ENCODE measurements at regions of chr7 and their contacts with region 1.

Region 1: GRCh38 chr7:121395961-121396757 is at the start of gene FAM3C:
- DNase-seq: peak; percentile 96
- ATAC-seq: peak; percentile 88
- H3K4me3 Mint-ChIP-seq: peak within 1 kb of the TSS; percentile 91
- H3K27ac Mint-ChIP-seq: peak within 1 kb of the TSS; percentile 90
- H3K4me1 Mint-ChIP-seq: peaks cover 42% of the 10 kb centered on the region
- H3K27me3 Mint-ChIP-seq: no peaks in the 10 kb centered on the region
- CTCF ChIP-seq: no peak
- total RNA-seq, gene FAM3C: 54.8 and 59.3 TPM in 2 replicates

Region 2: DNA sequence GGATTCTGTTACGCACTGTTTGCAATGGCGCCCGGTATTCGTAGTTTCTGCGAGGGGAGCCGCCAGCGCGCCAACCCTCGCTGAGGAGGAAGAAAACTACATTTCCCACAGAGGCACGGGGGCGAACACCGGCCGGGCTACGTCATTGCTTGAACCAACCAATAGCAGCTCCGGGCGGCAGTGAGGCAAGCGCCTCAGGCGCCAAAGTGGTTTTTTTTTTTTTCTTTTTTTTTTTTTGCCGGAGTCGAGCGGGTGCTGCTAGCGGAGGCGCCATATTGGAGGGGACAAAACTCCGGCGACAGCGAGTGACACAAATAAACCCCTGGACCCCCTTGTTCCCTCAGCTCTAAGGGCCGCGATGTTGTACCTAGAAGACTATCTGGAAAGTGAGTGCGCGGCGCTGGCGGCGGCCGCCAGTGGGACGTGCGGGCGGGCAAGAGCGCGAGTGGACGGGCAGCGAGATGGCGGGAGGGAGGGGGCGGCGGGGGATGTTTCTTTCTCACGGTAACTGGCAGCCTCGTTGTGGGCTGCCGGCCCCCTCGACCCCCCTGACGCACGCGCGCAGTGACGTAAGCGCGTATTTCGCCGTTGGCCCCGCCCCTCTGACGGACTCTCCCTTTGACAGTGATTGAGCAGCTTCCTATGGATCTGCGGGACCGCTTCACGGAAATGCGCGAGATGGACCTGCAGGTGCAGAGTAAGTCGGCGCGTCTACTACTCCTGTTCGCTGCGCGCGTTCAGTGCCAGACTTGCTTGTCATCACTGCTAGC is 445.4 kb before region 1 on chr7 and contains the start of gene ING3:
- CTCF ChIA-PET with region 1: no interaction called
- POLR2A ChIA-PET with region 1: interaction called, 22 read pairs
- intact Hi-C with region 1: loop called (anchors 1 kb)
- DNase-seq: peak; percentile 99
- ATAC-seq: peak; percentile 89
- H3K4me3 Mint-ChIP-seq: peak within 1 kb of the TSS; percentile 95
- H3K27ac Mint-ChIP-seq: peak within 1 kb of the TSS; percentile 99
- H3K4me1 Mint-ChIP-seq: peaks cover 26% of the 10 kb centered on the region
- H3K27me3 Mint-ChIP-seq: peaks cover 3% of the 10 kb centered on the region
- CTCF ChIP-seq: no peak
- total RNA-seq, gene ING3: 32.7 and 36.1 TPM in 2 replicates

Region 3: DNA sequence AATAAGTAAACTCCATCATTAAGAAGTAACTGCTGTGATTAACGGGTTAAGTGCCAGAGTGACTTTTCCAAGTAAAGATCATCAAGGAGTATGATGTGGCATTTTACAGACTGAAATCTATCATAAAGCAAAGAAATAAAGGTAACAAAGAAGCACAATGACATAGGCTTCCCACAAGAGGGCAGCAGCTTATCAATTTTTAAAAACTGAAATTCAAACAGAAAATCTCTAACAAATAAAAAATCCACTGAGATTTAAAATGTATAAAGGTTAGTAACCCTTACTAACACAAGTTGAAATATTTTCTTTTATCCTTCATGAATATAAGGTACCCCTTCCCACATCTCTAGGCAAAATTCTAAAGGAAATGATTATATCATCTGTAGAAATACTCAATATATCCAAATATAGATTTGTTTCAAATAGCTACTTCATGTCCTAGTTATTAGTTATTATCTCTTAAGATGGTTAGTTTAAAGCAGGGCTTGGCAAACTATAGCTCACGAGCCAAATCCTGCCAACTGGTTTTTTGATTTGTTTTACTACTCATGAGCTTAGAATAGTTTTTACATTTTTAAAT is 29.2 kb before region 1 on chr7:
- CTCF ChIA-PET with region 1: interaction called, 221 read pairs
- POLR2A ChIA-PET with region 1: interaction called, 152 read pairs
- intact Hi-C with region 1: loop called (anchors 1 kb)
- DNase-seq: no peak
- ATAC-seq: peak; percentile 49
- H3K4me3 Mint-ChIP-seq: no peak overlapping the region
- H3K27ac Mint-ChIP-seq: peak overlapping the region; percentile 35
- H3K4me1 Mint-ChIP-seq: peaks cover 62% of the 10 kb centered on the region
- H3K27me3 Mint-ChIP-seq: no peaks in the 10 kb centered on the region
- CTCF ChIP-seq: peak; percentile 21

Region 4: GRCh38 chr7:121379930-121380329 is 16.2 kb before region 1 on chr7:
- CTCF ChIA-PET with region 1: interaction called, 221 read pairs
- POLR2A ChIA-PET with region 1: interaction called, 152 read pairs
- intact Hi-C with region 1: loop called (anchors 1 kb)
- DNase-seq: no peak
- ATAC-seq: no peak
- H3K4me3 Mint-ChIP-seq: peak overlapping the region; percentile 24
- H3K27ac Mint-ChIP-seq: peak overlapping the region; percentile 71
- H3K4me1 Mint-ChIP-seq: peaks cover 94% of the 10 kb centered on the region
- H3K27me3 Mint-ChIP-seq: no peaks in the 10 kb centered on the region
- CTCF ChIP-seq: no peak

Region 5: DNA sequence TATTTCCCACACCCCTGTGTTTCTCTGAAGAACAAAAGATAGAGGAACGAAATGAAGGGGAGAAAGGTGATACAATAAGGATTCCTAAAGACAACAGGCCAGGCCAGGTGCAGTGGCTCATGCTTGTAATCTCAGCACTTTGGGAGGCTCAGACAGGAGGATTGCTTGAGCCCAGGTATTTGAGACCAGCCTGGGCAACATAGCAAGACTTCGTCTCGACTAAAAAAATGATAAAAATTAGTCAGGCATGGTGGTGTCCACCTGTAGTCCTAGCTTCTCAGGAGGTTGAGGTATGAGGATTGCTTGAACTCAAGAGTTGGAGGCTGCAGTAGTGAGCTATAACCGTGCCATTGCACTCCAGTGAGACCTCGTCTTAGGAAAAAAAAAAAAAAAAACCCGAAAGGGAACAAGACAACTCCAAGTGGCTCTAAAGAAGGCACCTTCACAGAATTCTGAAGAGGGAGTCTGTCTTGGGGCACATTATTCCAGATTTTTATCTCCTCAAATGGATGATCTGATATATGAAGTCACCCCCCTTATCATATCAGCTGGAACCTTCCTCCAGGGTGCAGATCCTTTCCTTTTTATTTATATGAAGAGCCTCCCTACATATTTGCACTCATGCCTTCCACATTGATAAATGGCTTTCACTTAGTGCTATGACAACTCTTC is 41.4 kb after region 1 on chr7:
- CTCF ChIA-PET with region 1: interaction called, 7 read pairs
- POLR2A ChIA-PET with region 1: interaction called, 7 read pairs
- intact Hi-C with region 1: loop called (anchors 1 kb)
- DNase-seq: no peak
- ATAC-seq: peak; percentile 9
- H3K4me3 Mint-ChIP-seq: peak overlapping the region; percentile 82
- H3K27ac Mint-ChIP-seq: peak overlapping the region; percentile 89
- H3K4me1 Mint-ChIP-seq: peaks cover 47% of the 10 kb centered on the region
- H3K27me3 Mint-ChIP-seq: no peaks in the 10 kb centered on the region
- CTCF ChIP-seq: no peak

Measured in activated B cell treated with CpG ODN at 0.5 μM for 24 hours (primary cell).